ENCODE measurements at regions of chr5 and their contacts with region 1.

Region 1: GRCh38 chr5:82351754-82352145 is 73.6 kb upstream of the RPS23 start:
- DNase-seq: no peak
- H3K4me3 ChIP-seq: no peak overlapping the region
- H3K27ac ChIP-seq: no peak overlapping the region
- H3K4me1 ChIP-seq: peaks cover 23% of the 10 kb centered on the region
- H3K27me3 ChIP-seq: no peaks in the 10 kb centered on the region
- CTCF ChIP-seq: peak; percentile 37 to 89 (median 73)
- POLR2A ChIP-seq: no peak

Region 2: DNA sequence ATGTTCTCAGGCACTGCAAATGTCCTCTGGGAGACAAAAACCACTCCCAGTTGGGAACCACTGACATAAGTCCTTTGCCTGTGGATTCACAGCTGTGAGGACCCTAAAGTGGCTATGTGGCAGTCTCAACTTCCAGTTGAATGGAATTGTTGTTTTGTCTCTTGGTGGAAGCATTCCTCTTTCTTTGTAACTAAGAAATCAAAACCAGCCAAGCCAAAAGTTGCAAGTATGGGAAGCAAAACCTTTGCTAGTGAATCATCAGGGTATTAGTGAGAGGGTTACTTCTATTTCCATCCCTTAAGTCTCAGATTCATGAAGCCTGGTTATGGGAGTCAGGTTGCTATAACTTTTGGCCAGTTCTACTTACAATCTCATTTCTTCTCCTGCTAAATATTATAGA is 23.8 kb before region 1 on chr5:
- intact Hi-C with region 1: loop called (anchors 1 kb)
- DNase-seq: no peak
- H3K4me3 ChIP-seq: no peak overlapping the region
- H3K27ac ChIP-seq: no peak overlapping the region
- H3K4me1 ChIP-seq: peaks cover 5% of the 10 kb centered on the region
- H3K27me3 ChIP-seq: no peaks in the 10 kb centered on the region
- CTCF ChIP-seq: no peak
- POLR2A ChIP-seq: no peak

Region 3: DNA sequence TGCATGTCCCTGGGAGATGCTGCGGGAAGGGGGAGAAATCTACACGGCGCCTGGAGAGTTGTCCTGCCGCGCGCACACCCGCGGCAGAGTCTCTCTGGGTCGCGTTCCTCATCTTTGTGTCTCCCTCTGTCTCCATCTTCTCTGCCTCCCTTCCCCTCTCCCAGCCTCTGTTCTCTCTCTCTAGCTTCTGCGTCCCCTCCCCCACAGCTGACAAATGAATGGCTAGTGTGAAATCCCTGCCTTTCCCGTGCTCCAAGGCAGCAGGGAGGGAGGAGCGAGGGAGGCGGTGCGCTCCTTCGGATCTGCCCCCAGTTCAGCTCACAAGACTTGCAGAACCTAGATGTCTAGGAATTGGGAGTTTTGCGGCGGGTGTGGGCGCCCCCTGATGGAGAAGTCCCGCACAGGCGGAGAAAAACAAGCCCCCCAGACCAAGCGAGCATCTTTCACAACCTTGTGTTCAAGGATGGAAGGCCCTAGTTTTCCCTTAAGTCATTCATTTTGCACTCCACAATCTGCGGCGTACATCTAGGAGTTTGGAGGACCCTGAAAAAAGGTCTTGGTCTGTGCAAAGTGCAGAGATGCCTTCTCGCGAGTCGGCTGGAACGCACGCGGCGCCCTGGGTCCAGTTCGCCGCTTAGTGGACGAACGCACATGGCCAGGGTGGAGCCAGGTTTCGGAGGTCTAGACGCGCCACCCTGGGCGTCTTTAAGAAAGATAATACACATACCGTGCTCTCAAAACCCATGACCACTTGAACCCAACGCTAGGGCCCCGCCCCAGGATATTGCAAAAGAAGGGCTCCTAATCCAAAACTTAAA is 1121.8 kb after region 1 on chr5:
- intact Hi-C with region 1: loop called (anchors 10 kb)
- DNase-seq: peak in 1 of 2 donors; percentile 99
- H3K4me3 ChIP-seq: peak overlapping the region; percentile 51 to 57
- H3K27ac ChIP-seq: peak overlapping the region; percentile 73
- H3K4me1 ChIP-seq: peaks cover 23% of the 10 kb centered on the region
- H3K27me3 ChIP-seq: peaks cover 6% of the 10 kb centered on the region
- CTCF ChIP-seq: peak; percentile 26 to 87 (median 79)
- POLR2A ChIP-seq: peak in 1 of 2 donors; percentile 56